Naive thymus-derived CD4-positive, alpha-beta T cell (primary cell): ENCODE measurements at regions of chr14 and their contacts with region 1.

Region 1: GRCh38 chr14:57066887-57067513 is 201.7 kb downstream of the EXOC5 start:
- DNase-seq: peak in 1 of 9 donors; percentile 41
- ATAC-seq: no peak
- H3K4me3 ChIP-seq: no peak overlapping the region
- H3K4me3 Mint-ChIP-seq: no peak overlapping the region
- H3K27ac ChIP-seq: no peak overlapping the region
- H3K27ac Mint-ChIP-seq: no peak overlapping the region
- H3K4me1 ChIP-seq: no peaks in the 10 kb centered on the region
- H3K4me1 Mint-ChIP-seq: peaks cover 0 to 8% (median 0%) of the 10 kb centered on the region in 7 donors
- H3K27me3 ChIP-seq: no peaks in the 10 kb centered on the region
- H3K27me3 Mint-ChIP-seq: peaks cover 36 to 45% (median 39%) of the 10 kb centered on the region in 5 donors

Region 2: DNA sequence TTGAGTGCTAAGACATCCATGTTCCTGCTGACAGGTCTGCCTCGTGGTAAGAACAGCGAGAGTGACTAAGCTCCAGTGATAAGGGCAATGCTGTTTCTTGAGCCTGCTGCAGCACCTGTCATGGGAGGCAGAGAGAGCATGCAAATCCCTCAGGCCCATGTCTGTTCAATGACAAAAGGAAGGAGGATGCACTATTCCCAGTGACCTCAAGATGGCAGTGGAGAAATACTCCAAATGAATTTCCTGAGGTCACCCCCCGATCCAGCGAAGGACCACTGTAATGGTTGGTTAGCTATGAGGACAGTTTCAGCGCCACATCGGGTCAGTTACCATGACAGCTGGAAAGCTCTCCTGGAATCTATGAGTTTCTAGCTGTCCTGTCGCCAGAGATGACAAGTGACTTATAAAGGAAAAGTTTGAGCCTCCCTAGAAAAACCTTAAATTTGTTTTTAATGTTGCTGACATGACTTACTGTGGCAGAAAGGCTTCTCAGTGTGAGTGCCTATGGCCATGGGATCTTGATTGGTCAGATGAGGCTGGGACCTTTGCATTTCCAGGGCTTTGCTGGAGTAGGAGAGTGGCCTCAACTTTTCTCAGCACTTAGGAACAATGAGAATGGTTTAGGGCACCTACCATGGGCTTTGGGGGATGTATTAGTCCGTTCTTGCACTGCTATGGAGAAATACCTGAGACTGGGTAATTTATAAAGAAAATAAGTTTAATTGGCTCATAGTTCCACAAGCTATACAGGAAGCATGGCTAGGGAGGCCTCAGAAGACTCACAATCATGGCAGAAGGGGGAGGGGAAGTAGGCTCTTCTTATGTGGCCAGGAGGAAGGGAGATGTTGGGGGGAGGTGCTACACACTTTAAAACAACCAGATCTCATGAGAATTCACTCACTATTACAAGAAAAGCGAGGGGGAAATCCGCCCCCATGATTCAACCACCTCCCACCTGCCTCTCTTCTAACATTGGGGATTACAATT is 575.4 kb before region 1 on chr14:
- CTCF ChIA-PET with region 1: no interaction called
- POLR2A ChIA-PET with region 1: no interaction called
- intact Hi-C with region 1: loop called (anchors 5 to 10 kb)
- DNase-seq: peak in 5 of 9 donors; percentile 10 to 36 (median 21)
- ATAC-seq: no peak
- H3K4me3 ChIP-seq: peak overlapping the region; percentile 22
- H3K4me3 Mint-ChIP-seq: peak overlapping the region in 6 of 10 donors; percentile 40 to 59 (median 48)
- H3K27ac ChIP-seq: no peak overlapping the region
- H3K27ac Mint-ChIP-seq: no peak overlapping the region
- H3K4me1 ChIP-seq: no peaks in the 10 kb centered on the region
- H3K4me1 Mint-ChIP-seq: peaks cover 0 to 13% (median 10%) of the 10 kb centered on the region in 7 donors
- H3K27me3 ChIP-seq: no peaks in the 10 kb centered on the region
- H3K27me3 Mint-ChIP-seq: peaks cover 0 to 6% (median 0%) of the 10 kb centered on the region in 5 donors

Region 3: DNA sequence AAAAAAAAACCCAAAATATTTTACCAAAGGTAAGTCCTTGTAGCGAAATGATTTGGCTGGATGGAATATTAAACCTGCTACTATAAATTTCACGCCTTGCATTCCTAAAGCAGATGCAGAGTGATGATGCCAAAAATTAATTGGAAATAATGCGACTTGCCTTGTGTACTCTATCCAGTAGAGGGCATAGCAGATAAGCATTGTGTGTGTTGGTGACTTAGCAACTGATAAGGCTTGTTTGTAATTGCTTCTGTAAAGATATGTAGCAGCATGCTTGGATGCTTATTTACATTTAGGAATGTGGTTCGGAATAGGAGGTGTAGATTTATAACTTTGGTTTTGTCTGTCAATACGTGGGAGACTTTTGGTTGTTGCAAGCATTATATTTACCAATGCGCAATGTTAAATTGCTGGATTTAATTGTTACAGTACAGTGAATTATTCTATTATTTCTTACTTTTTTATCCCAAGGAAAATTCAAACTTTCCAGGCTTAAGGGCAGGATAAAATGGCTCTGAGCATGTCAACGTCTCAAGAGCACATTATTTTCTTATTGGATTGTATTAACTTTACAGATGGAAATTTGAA is 406.9 kb before region 1 on chr14:
- CTCF ChIA-PET with region 1: no interaction called
- POLR2A ChIA-PET with region 1: no interaction called
- intact Hi-C with region 1: loop called in 1 of 2 experiments (anchors 5 kb)
- DNase-seq: peak in 1 of 9 donors; percentile 6
- ATAC-seq: no peak
- H3K4me3 ChIP-seq: no peak overlapping the region
- H3K4me3 Mint-ChIP-seq: no peak overlapping the region
- H3K27ac ChIP-seq: no peak overlapping the region
- H3K27ac Mint-ChIP-seq: no peak overlapping the region
- H3K4me1 ChIP-seq: no peaks in the 10 kb centered on the region
- H3K4me1 Mint-ChIP-seq: no peaks in the 10 kb centered on the region
- H3K27me3 ChIP-seq: no peaks in the 10 kb centered on the region
- H3K27me3 Mint-ChIP-seq: peaks cover 0 to 7% (median 4%) of the 10 kb centered on the region in 5 donors

Region 4: GRCh38 chr14:56816574-56817391 is 250.2 kb before region 1 on chr14:
- CTCF ChIA-PET with region 1: no interaction called
- POLR2A ChIA-PET with region 1: no interaction called
- intact Hi-C with region 1: loop called in 1 of 2 experiments (anchors 10 kb)
- DNase-seq: no peak
- ATAC-seq: no peak
- H3K4me3 ChIP-seq: no peak overlapping the region
- H3K4me3 Mint-ChIP-seq: no peak overlapping the region
- H3K27ac ChIP-seq: no peak overlapping the region
- H3K27ac Mint-ChIP-seq: no peak overlapping the region
- H3K4me1 ChIP-seq: no peaks in the 10 kb centered on the region
- H3K4me1 Mint-ChIP-seq: peaks cover 0 to 9% (median 0%) of the 10 kb centered on the region in 7 donors
- H3K27me3 ChIP-seq: peaks cover 0 to 16% of the 10 kb centered on the region in 2 donors
- H3K27me3 Mint-ChIP-seq: peaks cover 59 to 78% (median 65%) of the 10 kb centered on the region in 5 donors

Region 5: GRCh38 chr14:56949828-56950227 is 117.2 kb before region 1 on chr14:
- CTCF ChIA-PET with region 1: no interaction called
- POLR2A ChIA-PET with region 1: no interaction called
- intact Hi-C with region 1: no loop called
- DNase-seq: no peak
- ATAC-seq: no peak
- H3K4me3 ChIP-seq: no peak overlapping the region
- H3K4me3 Mint-ChIP-seq: no peak overlapping the region
- H3K27ac ChIP-seq: no peak overlapping the region
- H3K27ac Mint-ChIP-seq: no peak overlapping the region
- H3K4me1 ChIP-seq: no peaks in the 10 kb centered on the region
- H3K4me1 Mint-ChIP-seq: no peaks in the 10 kb centered on the region
- H3K27me3 ChIP-seq: peaks cover 0 to 4% of the 10 kb centered on the region in 2 donors
- H3K27me3 Mint-ChIP-seq: peaks cover 0 to 34% (median 27%) of the 10 kb centered on the region in 5 donors

Region 6: GRCh38 chr14:57293866-57294837 is 227.2 kb after region 1 on chr14:
- CTCF ChIA-PET with region 1: no interaction called
- POLR2A ChIA-PET with region 1: no interaction called
- intact Hi-C with region 1: loop called in 1 of 2 experiments (anchors 10 kb)
- DNase-seq: peak in 2 of 9 donors; percentile 2 to 7
- ATAC-seq: no peak
- H3K4me3 ChIP-seq: no peak overlapping the region
- H3K4me3 Mint-ChIP-seq: no peak overlapping the region
- H3K27ac ChIP-seq: no peak overlapping the region
- H3K27ac Mint-ChIP-seq: no peak overlapping the region
- H3K4me1 ChIP-seq: no peaks in the 10 kb centered on the region
- H3K4me1 Mint-ChIP-seq: no peaks in the 10 kb centered on the region
- H3K27me3 ChIP-seq: no peaks in the 10 kb centered on the region
- H3K27me3 Mint-ChIP-seq: no peaks in the 10 kb centered on the region

Region 7: GRCh38 chr14:57609192-57610075 is 542.4 kb after region 1 on chr14:
- CTCF ChIA-PET with region 1: no interaction called
- POLR2A ChIA-PET with region 1: no interaction called
- intact Hi-C with region 1: no loop called
- DNase-seq: no peak
- ATAC-seq: no peak
- H3K4me3 ChIP-seq: no peak overlapping the region
- H3K4me3 Mint-ChIP-seq: no peak overlapping the region
- H3K27ac ChIP-seq: no peak overlapping the region
- H3K27ac Mint-ChIP-seq: no peak overlapping the region
- H3K4me1 ChIP-seq: no peaks in the 10 kb centered on the region
- H3K4me1 Mint-ChIP-seq: peaks cover 0 to 2% (median 0%) of the 10 kb centered on the region in 7 donors
- H3K27me3 ChIP-seq: no peaks in the 10 kb centered on the region
- H3K27me3 Mint-ChIP-seq: peaks cover 0 to 11% (median 4%) of the 10 kb centered on the region in 5 donors